Ovary (tissue), 10 donors: ENCODE measurements at regions of chr15 and their contacts with region 1.

Region 1: GRCh38 chr15:98083203-98083910 is 122.9 kb downstream of the ARRDC4 start:
- DNase-seq: no peak
- H3K4me3 ChIP-seq: no peak overlapping the region
- H3K27ac ChIP-seq: no peak overlapping the region
- H3K4me1 ChIP-seq: no peaks in the 10 kb centered on the region
- H3K27me3 ChIP-seq: no peaks in the 10 kb centered on the region
- CTCF ChIP-seq: no peak
- EP300 ChIP-seq: no peak
- POLR2A ChIP-seq: no peak

Region 2: DNA sequence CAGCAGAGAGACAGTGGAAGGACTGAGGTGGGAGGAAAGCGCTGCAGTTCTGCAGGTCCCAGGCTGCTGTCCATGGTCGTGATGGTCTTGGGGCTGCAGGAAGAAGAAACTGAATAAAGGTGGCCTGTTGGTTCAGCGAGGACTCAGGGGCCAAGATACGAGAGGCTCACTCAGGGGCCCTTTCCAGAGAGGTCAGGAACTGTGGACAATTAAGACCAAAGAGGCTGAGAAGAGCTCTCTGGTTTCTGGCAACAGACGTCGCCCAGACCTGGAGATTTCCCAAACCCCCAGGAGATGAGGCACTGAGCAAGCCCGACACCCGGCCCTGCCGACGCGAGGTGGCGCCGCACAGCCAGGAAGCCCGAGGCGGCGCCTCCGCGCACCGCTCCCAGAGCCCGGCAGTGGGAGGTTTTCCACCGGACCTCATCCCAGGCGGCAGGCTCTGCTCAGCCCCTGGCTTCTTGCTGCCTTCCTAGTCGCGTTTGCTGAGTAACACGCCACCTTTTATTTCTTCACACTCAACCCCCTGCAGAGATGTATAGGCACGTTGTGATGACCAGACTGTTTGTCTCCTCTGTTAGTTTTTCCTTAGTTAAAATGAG is 179.3 kb before region 1 on chr15:
- intact Hi-C with region 1: loop called in 3 of 4 experiments (anchors 5 kb)
- DNase-seq: peak; percentile 47 to 86 (median 62)
- H3K4me3 ChIP-seq: no peak overlapping the region
- H3K27ac ChIP-seq: no peak overlapping the region
- H3K4me1 ChIP-seq: no peaks in the 10 kb centered on the region
- H3K27me3 ChIP-seq: no peaks in the 10 kb centered on the region
- CTCF ChIP-seq: peak in 1 of 3 donors; percentile 38
- EP300 ChIP-seq: no peak
- POLR2A ChIP-seq: no peak

Region 3: DNA sequence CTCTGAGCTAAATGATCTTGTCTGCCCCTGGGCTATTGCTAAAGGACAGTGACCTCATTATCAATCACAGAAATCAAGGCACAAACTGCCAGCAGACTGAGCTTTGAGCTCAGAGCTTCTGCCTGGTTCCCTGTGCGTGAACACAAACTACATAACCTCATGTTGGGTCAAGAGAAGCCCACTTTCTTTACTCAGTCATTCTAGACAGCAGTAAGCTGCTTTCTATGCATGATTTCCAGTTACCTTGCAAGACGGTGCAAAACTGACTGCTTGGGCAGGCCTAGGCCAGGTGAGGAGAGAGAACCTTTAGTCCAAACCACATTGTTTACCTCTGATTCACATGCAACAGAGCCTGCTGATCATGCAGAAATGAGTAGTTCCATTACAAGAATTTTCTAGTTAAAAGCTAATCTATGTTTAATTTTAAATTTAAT is 47.8 kb before region 1 on chr15:
- intact Hi-C with region 1: no loop called
- DNase-seq: no peak
- H3K4me3 ChIP-seq: no peak overlapping the region
- H3K27ac ChIP-seq: no peak overlapping the region
- H3K4me1 ChIP-seq: no peaks in the 10 kb centered on the region
- H3K27me3 ChIP-seq: no peaks in the 10 kb centered on the region
- CTCF ChIP-seq: no peak
- EP300 ChIP-seq: no peak
- POLR2A ChIP-seq: no peak

Region 4: DNA sequence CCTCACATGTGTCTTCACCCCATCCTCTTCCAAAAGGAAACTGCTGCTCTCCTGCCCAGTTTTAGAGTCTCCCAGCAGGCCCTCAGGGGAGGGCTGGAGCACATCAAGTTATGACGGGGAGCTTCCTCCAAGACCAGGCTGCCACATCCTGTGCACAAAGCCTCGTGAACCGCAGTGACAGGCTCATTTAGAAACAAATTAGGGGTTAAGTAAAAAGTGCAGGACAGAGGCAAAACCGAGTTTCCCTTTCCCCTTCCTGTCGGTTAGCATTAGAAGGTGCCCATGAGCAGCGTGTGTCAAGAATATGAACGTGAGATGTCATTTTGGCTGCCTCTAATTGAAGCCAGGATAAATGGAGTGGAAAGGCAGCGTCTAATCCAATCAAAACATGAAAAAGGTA is 76.9 kb after region 1 on chr15:
- intact Hi-C with region 1: no loop called
- DNase-seq: no peak
- H3K4me3 ChIP-seq: no peak overlapping the region
- H3K27ac ChIP-seq: no peak overlapping the region
- H3K4me1 ChIP-seq: no peaks in the 10 kb centered on the region
- H3K27me3 ChIP-seq: no peaks in the 10 kb centered on the region
- CTCF ChIP-seq: no peak
- EP300 ChIP-seq: no peak
- POLR2A ChIP-seq: no peak

Region 5: DNA sequence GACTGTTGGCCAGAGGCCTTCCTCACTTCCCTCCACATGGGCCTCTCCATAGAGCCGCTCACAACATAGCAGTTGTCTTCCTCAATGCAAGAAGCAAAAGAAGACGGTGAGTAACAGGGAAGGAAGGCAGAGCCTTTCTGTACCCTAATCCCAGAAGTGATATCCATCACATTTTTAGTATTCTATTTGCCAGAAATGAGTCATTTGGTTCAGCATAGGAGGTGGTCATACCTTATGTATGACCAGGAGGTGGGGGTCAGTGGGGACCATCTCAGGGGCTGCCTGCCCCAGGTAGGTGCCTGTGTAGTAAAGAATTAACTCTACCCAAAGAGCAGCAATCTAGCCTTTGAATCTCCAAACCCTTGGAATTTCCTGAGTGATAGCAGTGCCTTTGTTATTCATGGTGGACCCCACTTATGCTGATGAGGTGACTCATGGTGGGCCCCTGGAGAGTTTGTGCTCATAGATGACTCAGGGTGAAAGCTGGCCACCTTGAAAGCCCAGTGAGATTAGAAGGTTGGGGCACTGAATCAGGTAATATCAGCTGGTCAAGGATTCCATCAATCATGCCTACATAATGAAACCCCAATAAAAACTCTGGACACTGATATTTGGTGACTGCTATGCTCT is 241.1 kb after region 1 on chr15:
- intact Hi-C with region 1: no loop called
- DNase-seq: no peak
- H3K4me3 ChIP-seq: no peak overlapping the region
- H3K27ac ChIP-seq: no peak overlapping the region
- H3K4me1 ChIP-seq: no peaks in the 10 kb centered on the region
- H3K27me3 ChIP-seq: no peaks in the 10 kb centered on the region
- CTCF ChIP-seq: no peak
- EP300 ChIP-seq: no peak
- POLR2A ChIP-seq: no peak